IMR-90 (cell line): ENCODE measurements at regions of chr9 and their contacts with region 1.

Region 1: DNA sequence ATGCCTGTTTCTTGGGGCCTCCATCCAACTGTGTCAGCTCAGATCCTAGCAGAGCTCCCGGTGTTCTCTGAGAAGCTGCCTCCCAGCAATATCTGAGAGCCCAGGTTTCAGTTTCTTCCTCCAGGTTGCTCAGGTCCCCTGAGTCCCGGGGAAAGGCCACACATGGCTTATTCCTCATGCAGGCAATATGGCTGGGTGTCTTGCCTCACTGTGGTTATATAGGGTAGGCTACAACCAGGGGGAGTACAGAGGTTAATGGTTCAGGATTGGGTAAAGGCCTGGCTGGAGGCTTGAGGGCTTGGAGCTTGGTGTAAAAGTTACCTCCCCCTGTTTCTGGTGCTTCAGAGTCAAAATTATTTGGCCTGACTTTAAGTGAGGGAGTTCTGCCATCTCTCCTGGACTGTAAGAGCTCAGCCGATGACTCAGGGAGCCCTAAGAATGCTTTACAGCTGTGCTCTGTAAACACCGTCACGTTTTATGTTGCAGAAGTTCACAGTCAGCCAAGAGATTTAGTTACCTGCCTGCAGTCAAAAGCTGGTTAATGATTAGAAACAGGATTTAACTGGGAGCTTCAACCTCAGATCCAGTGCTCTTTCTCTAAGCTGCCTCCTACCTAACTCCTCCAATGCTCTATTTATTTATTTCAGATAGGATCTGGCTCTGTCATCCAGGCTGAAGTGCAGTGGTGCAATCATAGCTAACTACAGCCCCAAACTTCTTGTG is 24.3 kb upstream of the UBAP2 start:
- DNase-seq: peak; percentile 96
- ATAC-seq: peak; percentile 88
- H3K4me3 ChIP-seq: no peak overlapping the region
- H3K27ac ChIP-seq: peak overlapping the region; percentile 87
- H3K4me1 ChIP-seq: peaks cover 14% of the 10 kb centered on the region
- H3K27me3 ChIP-seq: no peaks in the 10 kb centered on the region
- CTCF ChIP-seq: no peak
- POLR2A ChIP-seq: no peak
- RAD21 ChIP-seq: no peak; the same call in 1 of the 2 replicates

Region 2: DNA sequence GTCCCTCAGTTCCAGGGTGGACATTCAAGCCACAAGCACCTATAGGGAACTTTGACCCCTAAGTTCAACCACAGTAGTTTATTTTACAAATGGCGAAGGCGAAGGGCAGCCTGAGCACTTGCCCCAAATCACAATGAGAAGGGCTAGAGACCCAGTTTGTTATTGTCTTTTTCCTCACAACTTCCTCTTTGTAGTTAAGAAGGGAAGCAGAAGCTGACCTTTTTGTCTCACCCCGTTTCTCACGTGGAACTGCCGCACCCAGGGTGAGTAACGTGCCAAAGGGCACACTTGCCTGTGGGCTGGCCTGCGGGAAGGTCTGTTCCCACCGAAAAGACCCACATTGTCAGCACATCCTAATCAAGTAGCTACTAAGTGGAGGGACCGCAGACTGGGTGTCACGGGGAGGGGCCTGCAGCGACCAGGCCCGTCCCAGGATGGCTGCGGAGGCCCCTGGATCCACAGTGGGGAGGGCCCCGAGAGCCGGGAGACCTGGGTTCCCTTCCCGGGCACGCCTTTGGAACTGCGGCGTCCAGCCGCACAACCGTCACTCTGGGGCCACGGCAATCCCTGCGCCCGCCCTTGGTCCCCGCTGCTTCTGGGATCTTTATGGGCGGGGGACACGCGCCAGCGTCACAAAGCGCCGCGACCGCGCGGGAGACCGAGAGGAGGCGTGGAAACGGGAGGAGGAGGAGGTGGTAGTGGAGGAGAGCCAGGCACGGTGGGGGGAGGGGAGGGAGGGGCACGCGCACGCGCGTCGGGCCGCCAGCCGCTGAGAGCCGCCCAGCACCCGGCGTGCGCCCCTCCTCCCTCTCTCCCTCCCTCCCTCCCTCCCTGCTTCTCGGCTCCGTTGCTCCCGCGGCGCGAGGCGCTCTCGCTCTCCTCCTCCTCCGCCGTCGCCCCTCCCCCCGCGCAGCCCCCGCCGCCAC is 256.4 kb before region 1 on chr9 and contains the start of gene UBE2R2:
- CTCF ChIA-PET with region 1: interaction called, 10 read pairs
- POLR2A ChIA-PET with region 1: no interaction called
- dilution Hi-C with region 1: no loop called
- in situ Hi-C with region 1: no loop called
- intact Hi-C with region 1: loop called (anchors 2 kb)
- DNase-seq: peak; percentile 86
- ATAC-seq: peak; percentile 73
- H3K4me3 ChIP-seq: peak within 1 kb of the TSS; percentile 100
- H3K27ac ChIP-seq: peak within 1 kb of the TSS; percentile 98
- H3K4me1 ChIP-seq: peaks cover 15% of the 10 kb centered on the region
- H3K27me3 ChIP-seq: no peaks in the 10 kb centered on the region
- CTCF ChIP-seq: no peak
- POLR2A ChIP-seq: peak; percentile 81; the same call in 1 of the 2 replicates
- RAD21 ChIP-seq: no peak
- total RNA-seq, gene UBE2R2: 12.7 and 17.5 TPM in 2 replicates

Region 3: DNA sequence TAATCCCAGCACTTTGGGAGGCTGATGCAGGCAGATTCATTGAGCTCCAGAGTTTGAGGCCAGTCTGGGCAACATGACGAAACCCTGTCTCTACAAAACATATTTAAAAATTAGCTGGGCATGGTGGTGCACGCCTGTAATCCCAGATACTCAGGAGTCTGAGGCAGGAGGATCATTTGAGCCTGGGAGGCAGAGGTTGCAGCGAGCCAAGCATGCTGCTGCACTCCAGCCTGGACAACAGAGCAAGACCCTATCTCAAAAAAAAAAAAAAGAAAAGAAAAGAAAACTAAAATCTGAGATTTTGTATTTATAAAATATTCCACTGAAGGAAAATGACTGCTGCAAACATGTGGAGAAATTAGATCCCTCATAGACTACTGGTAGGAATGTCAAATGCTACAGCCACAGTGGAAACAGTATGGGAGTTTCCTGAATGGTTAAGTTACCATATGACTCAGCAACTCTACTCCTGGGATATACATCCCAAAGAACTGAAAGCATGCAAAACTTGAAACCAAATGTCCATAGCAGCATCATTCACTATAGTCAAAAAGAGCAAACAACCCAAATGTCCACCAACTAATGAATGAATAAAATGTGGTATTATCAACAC is 130.5 kb before region 1 on chr9:
- CTCF ChIA-PET with region 1: interaction called, 4 read pairs
- POLR2A ChIA-PET with region 1: no interaction called
- dilution Hi-C with region 1: no loop called
- in situ Hi-C with region 1: no loop called
- intact Hi-C with region 1: loop called (anchors 5 kb)
- DNase-seq: peak; percentile 93
- ATAC-seq: peak; percentile 84
- H3K4me3 ChIP-seq: no peak overlapping the region
- H3K27ac ChIP-seq: peak overlapping the region; percentile 94; the same call in 1 of the 2 replicates
- H3K4me1 ChIP-seq: peaks cover 22% of the 10 kb centered on the region
- H3K27me3 ChIP-seq: no peaks in the 10 kb centered on the region
- CTCF ChIP-seq: peak; percentile 73
- POLR2A ChIP-seq: no peak
- RAD21 ChIP-seq: no peak; the same call in 1 of the 2 replicates

Region 4: DNA sequence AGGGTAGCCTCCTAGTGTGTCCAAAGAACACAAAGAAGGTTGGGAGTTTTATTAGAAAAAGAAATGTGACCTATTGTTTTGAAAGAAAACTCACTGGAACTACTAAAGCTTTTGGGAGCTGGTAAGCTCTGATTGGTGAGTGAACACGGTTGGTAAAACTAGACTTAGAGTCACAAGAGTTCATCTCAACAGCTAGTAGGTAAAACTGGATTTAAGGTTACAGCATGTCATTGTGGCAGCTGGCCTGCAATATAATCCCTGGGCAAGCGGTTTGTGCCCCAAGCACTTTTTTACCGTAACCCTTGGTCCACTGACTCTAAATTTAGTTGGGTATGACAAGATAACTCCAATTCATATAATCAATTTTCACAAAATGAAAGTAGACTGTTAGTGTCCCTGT is 71.7 kb before region 1 on chr9:
- CTCF ChIA-PET with region 1: no interaction called
- POLR2A ChIA-PET with region 1: no interaction called
- dilution Hi-C with region 1: no loop called
- in situ Hi-C with region 1: no loop called
- intact Hi-C with region 1: no loop called
- DNase-seq: no peak
- ATAC-seq: no peak
- H3K4me3 ChIP-seq: no peak overlapping the region
- H3K27ac ChIP-seq: no peak overlapping the region
- H3K4me1 ChIP-seq: no peaks in the 10 kb centered on the region
- H3K27me3 ChIP-seq: no peaks in the 10 kb centered on the region
- CTCF ChIP-seq: no peak
- POLR2A ChIP-seq: no peak
- RAD21 ChIP-seq: no peak

Region 5: DNA sequence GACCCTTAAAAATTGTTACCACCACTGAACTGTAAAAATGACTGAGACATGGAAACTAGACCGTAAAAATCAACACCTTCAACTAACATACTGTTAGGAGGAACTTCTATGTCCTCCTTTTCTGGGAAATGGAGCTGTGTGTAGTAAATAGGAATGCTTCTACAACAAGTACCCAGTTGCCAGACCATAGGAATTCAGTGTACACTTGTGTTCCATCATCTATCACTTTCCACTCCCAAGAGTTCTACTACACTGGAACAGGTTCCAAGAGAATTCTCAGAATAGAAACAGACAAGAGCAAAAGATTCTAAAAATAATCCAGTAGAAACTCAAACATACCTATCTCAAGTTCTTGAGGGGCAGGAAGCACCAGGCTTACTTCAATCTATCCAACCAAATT is 48.0 kb before region 1 on chr9:
- CTCF ChIA-PET with region 1: interaction called, 4 read pairs
- POLR2A ChIA-PET with region 1: no interaction called
- dilution Hi-C with region 1: no loop called
- in situ Hi-C with region 1: no loop called
- intact Hi-C with region 1: loop called (anchors 1 kb)
- DNase-seq: peak; percentile 40
- ATAC-seq: no peak; the same call in 1 of the 2 replicates
- H3K4me3 ChIP-seq: no peak overlapping the region
- H3K27ac ChIP-seq: no peak overlapping the region
- H3K4me1 ChIP-seq: no peaks in the 10 kb centered on the region
- H3K27me3 ChIP-seq: no peaks in the 10 kb centered on the region
- CTCF ChIP-seq: no peak
- POLR2A ChIP-seq: no peak
- RAD21 ChIP-seq: no peak

Region 6: DNA sequence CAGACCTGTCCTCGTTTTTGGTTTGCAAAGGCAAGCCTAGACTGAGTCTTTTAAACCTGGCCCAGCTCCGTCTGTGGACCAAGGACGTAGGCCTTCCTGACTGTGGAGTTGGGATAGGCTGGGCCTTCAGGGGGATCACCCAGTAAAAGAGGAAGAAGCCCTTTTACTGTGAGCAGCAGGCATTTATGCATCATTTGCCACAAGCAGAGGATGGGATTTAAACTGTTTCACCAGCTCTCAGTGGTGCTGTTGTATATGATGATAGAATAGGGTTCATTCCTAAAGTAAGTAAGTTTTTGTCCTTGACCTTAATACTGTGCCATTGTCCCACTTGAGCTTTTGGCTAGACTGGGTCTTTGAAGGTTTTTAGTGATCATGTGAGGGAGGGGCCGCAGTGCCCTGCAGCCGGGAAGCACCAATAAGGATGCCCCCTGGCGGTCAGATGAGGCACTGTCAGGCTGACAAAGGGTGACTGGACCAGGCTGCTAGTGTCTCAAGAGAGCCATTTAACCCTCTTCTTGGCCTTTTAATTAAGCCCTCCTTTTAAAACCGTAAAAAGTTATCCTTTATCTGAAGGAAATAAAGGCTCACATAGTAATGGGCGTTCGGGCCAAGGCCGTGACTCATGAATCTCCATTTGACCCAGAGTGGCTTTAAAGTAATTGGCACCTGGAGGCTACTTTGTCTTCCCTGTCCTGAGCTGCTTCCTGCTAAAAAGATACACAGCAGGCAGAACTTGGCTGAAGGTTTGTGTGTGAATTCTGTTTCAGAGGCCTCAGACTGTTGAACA is 179.8 kb after region 1 on chr9:
- CTCF ChIA-PET with region 1: interaction called, 16 read pairs
- POLR2A ChIA-PET with region 1: no interaction called
- dilution Hi-C with region 1: no loop called
- in situ Hi-C with region 1: no loop called
- intact Hi-C with region 1: loop called (anchors 1 kb)
- DNase-seq: peak; percentile 54
- ATAC-seq: peak; percentile 71
- H3K4me3 ChIP-seq: no peak overlapping the region
- H3K27ac ChIP-seq: no peak overlapping the region
- H3K4me1 ChIP-seq: peaks cover 25% of the 10 kb centered on the region
- H3K27me3 ChIP-seq: no peaks in the 10 kb centered on the region
- CTCF ChIP-seq: peak; percentile 81
- POLR2A ChIP-seq: no peak
- RAD21 ChIP-seq: peak; percentile 64